Endothelial cell of umbilical vein (primary cell): ENCODE measurements at regions of chr12 and their contacts with region 1.

Region 1: GRCh38 chr12:132908145-132909044 is 21.0 kb upstream of the CHFR start:
- DNase-seq: peak; percentile 97
- H3K4me3 ChIP-seq: peak overlapping the region; percentile 7 to 51 (median 47)
- H3K27ac ChIP-seq: no peak overlapping the region
- H3K4me1 ChIP-seq: peaks cover 2% of the 10 kb centered on the region
- H3K27me3 ChIP-seq: peaks cover 3 to 17% of the 10 kb centered on the region in 2 experiments
- CTCF ChIP-seq: no peak
- POLR2A ChIP-seq: no peak

Region 2: DNA sequence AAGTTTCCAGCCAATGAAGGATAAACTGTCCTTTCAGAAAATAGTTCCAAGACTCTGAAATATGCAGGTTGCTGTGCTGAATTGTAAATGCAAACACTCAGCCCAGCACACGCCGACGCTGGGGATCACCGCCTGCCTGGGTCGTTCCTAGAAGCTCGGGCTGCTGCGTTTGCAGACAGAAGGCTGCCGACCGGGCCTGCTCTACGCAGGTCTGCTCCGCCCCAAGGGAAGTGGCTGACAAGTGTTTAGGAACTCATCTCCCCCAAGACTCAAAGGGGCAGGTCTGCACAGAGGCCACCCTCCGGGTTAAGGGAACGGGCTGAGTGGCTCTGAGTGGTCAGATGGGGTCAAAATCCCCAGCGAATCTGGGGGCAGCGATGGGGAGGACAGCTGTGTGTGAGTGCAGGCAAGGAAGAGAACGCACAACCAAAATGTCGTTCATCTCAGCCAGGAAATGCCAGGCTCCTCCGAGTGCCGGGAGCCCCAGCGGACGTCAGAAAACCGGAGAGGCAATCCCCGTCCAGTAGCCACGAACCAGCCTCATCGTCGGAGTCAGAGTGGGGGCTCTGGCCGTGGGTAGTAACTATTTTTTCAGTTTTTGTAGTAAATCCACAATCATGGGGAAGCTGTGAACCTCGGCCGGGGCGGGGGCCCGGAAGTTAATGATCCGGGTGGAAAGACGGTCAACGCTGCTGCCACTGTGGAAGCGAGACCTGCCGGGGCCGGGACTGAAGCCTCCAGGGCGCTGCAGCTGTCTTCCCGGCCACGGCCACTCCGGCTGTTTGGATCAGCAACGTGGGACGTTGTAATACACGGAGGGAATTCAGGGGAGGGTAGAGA is 585.0 kb before region 1 on chr12:
- CTCF ChIA-PET with region 1: no interaction called
- POLR2A ChIA-PET with region 1: no interaction called
- dilution Hi-C with region 1: no loop called
- intact Hi-C with region 1: no loop called
- DNase-seq: no peak
- H3K4me3 ChIP-seq: no peak overlapping the region
- H3K27ac ChIP-seq: no peak overlapping the region
- H3K4me1 ChIP-seq: no peaks in the 10 kb centered on the region
- H3K27me3 ChIP-seq: no peaks in the 10 kb centered on the region
- CTCF ChIP-seq: no peak
- POLR2A ChIP-seq: no peak

Region 3: GRCh38 chr12:132798836-132799235 is 109.6 kb before region 1 on chr12:
- CTCF ChIA-PET with region 1: no interaction called
- POLR2A ChIA-PET with region 1: no interaction called
- dilution Hi-C with region 1: no loop called
- intact Hi-C with region 1: no loop called
- DNase-seq: no peak
- H3K4me3 ChIP-seq: no peak overlapping the region
- H3K27ac ChIP-seq: no peak overlapping the region
- H3K4me1 ChIP-seq: no peaks in the 10 kb centered on the region
- H3K27me3 ChIP-seq: no peaks in the 10 kb centered on the region
- CTCF ChIP-seq: no peak
- POLR2A ChIP-seq: no peak

Region 4: GRCh38 chr12:132887513-132888351 is 20.7 kb before region 1 on chr12 and contains the start of gene CHFR:
- CTCF ChIA-PET with region 1: interaction called, 6 read pairs
- POLR2A ChIA-PET with region 1: no interaction called
- dilution Hi-C with region 1: no loop called
- intact Hi-C with region 1: loop called (anchors 1 kb)
- DNase-seq: peak; percentile 97
- H3K4me3 ChIP-seq: peak within 1 kb of the TSS; percentile 52 to 90 (median 67)
- H3K27ac ChIP-seq: peak within 1 kb of the TSS; percentile 69
- H3K4me1 ChIP-seq: no peaks in the 10 kb centered on the region
- H3K27me3 ChIP-seq: no peaks in the 10 kb centered on the region
- CTCF ChIP-seq: no peak
- POLR2A ChIP-seq: peak; percentile 65
- total RNA-seq, gene CHFR: 64.7 and 66.5 TPM in 2 replicates

Region 5: GRCh38 chr12:133037207-133038005 is 129.0 kb after region 1 on chr12 and contains the start of gene ZNF84:
- CTCF ChIA-PET with region 1: no interaction called
- POLR2A ChIA-PET with region 1: no interaction called
- dilution Hi-C with region 1: no loop called
- intact Hi-C with region 1: loop called (anchors 1 kb)
- DNase-seq: peak; percentile 99
- H3K4me3 ChIP-seq: peak within 1 kb of the TSS; percentile 42 to 90 (median 78)
- H3K27ac ChIP-seq: peak within 1 kb of the TSS; percentile 59
- H3K4me1 ChIP-seq: no peaks in the 10 kb centered on the region
- H3K27me3 ChIP-seq: no peaks in the 10 kb centered on the region
- CTCF ChIP-seq: no peak
- POLR2A ChIP-seq: peak; percentile 83
- total RNA-seq, gene ZNF84: 26.0 TPM in 2 replicates